ENCODE measurements at regions of chr10 and their contacts with region 1.

Region 1: GRCh38 chr10:26860443-26861204 is at the start of gene ABI1:
- DNase-seq: peak; percentile 93 to 99 (median 96)

Region 2: GRCh38 chr10:26697163-26697921 is 163.3 kb before region 1 on chr10 and contains the start of gene PDSS1:
- intact Hi-C with region 1: loop called (anchors 2 kb)
- DNase-seq: peak; percentile 70 to 96 (median 78)

Region 3: DNA sequence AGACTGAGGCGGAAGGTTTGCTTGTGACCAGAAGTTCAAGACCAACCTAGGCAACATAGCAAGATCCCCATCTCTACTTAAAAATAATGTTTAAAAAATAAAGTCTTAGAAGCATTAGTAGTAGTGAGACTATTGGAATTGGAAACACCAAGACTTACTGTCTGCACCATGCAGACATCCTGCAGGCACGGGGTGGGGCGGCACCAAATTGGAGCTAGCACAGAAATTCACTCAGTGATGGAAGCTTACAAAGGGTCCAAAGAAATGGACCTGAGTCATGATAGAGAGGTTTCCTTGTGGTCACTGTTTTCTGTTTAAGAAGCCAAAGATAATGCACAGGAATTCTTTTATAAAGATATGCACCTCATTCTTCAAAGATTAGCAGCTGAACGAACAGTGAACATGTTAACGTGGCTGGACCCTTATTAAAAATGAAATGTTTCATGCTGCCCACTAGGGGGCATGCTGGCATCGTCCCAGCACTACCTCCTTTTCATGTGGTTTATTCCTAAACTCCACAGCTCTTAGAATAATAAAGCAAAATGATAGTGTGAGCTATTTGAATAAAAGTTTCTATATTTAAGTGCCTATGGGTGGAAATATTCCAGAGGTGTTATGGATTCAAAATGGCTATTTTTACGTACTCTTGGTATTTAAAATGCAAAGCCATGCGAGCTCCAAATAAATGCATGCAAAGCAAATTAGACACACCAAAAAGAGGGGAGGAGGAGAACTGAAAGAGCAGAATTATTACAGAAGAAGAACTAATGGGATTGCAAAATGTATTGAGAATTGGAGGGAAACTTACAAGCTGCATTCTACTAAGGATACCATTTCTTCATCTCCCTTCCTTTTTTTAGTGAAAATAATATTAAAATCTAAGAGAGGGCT is 134.5 kb before region 1 on chr10:
- intact Hi-C with region 1: loop called (anchors 1 kb)
- DNase-seq: peak; percentile 51 to 96 (median 78)

Region 4: GRCh38 chr10:27099916-27100812 is 239.5 kb after region 1 on chr10 and contains the start of gene ANKRD26:
- intact Hi-C with region 1: loop called (anchors 2 kb)
- DNase-seq: peak; percentile 92 to 99 (median 94)

Region 5: DNA sequence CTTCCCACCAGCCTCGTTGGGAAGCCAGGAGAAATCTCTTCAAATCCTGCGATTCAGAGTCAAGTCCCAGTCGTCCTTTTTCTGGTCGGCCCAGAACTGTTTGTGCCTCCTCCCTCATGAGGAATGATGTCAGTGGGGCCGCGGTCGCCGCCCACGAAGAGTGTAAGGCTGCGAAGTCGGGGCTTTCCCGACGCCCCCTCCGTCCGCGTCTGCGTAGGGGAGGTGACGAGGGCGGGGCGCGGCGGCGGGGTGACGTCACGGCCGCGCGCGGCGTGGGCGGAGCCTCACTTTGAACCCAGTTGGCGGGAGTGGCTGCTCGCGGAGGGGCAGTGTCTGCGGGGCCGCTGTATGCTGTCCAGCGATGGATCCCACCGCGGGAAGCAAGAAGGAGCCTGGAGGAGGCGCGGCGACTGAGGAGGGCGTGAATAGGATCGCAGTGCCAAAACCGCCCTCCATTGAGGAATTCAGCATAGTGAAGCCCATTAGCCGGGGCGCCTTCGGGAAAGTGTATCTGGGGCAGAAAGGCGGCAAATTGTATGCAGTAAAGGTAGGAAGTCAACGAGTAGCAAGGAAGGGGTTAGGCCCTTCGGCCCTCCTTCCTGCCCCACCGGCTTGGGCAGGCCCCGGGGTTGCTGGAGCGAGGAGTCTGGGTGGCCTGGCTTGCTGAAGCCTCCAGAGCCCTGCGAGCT is 294.6 kb after region 1 on chr10 and contains the start of gene MASTL:
- intact Hi-C with region 1: loop called (anchors 5 kb)
- DNase-seq: peak; percentile 78 to 99 (median 88)

Region 6: GRCh38 chr10:27241652-27242472 is 381.2 kb after region 1 on chr10:
- intact Hi-C with region 1: loop called (anchors 2 kb)
- DNase-seq: peak; percentile 81 to 98 (median 88)

Measured in posterior cingulate gyrus (tissue), 11 donors.